Left ventricle myocardium superior (tissue), 1 donor: ENCODE measurements at regions of chr2 and their contacts with region 1.

Region 1: DNA sequence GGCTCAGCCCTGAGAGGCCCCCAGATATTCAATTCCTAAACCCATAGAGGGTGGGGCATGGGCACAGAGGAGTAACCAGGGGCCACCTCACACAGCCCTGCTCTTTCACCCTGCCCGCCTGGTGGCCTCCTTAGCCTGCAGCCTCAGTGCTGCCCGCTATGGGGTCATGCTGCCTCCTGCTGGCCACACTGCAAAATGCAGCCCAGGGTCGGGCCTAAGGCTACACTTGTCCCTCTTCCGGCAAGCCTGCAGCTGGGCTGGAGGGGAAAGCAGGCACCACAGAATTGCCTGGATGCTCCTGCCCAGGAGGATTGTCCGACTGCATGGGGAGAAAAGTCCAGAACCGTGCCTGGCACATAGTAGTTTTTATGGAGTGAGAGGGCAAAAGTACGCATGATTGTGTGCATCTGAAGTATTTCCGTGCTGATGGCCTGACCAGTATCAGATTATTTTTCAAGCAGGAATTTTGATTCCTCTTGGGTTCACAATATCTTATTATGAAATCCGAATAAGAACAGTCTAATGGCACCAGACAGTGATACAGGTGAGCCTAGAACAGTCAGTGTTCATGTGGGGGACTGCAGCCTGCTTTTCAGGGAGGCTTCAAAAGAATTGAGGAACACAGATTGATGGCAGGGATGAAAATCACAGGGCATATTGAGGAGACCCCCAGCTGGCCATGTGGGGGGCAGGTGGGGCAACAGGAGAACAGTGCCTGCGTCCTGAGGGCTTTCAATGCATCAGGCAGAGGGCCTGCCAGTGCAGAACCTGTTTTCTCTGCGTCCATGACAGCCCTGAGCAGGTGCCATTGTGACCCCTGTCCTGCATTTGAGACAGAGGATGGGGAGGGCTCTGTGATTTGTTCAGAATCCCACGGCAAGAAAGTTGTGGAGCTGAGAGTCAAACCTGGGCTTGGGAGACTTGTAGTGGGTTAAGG is 51.2 kb upstream of the ALPP start:
- DNase-seq: peak; percentile 80
- ATAC-seq: peak; percentile 61

Region 2: GRCh38 chr2:231925303-231926179 is 401.8 kb before region 1 on chr2:
- intact Hi-C with region 1: loop called (anchors 10 kb)
- DNase-seq: peak; percentile 93
- ATAC-seq: peak; percentile 87